K562 (cell line): ENCODE measurements at regions of chr15 and their contacts with region 1.

Region 1: DNA sequence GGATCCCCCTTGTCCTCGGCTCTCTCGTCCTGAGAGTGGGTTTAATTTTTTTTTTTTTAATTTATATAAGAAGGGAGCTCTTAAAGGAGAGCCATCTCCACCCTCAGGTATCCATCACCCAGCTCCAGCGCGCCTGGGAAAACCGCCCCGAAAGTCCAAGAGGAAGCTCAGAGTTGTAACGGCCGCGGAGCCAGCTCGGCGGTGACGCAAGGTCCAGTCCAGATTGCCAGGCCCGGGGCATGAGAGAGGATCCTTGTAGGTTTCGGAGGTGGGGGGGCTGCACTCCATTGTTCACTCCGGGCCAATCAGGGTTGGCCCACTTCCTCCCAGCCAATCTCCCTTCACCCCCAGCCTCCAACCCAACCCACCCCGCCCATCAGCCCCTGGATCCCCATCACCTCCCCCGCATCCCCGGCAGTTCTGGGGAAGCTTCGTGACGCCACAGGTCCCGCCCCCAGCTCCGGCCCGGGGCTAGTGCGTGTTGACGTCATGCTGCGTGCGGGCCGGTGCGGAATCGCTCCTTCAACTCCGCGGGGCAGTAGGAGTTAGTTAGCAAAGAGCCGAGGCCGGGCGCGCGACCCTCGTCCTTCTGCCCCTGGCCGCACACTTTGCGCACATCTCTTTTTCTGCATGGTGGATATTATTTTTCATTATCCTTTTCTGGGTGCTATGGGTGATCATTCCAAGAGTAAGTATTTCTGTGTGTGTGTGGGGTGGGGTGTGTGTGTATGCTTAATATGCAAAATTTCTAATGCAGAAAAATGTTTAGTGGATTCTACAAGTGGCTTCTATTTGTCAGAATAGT is at the start of gene ISL2:
- DNase-seq: peak; percentile 97 to 99 (median 98)
- ATAC-seq: peak; percentile 89
- H3K4me3 ChIP-seq: peak within 1 kb of the TSS; percentile 53
- H3K27ac ChIP-seq: peak within 1 kb of the TSS; percentile 94
- H3K4me1 ChIP-seq: peaks cover 11 to 55% of the 10 kb centered on the region in 2 experiments
- H3K27me3 ChIP-seq: no peaks in the 10 kb centered on the region
- CTCF ChIP-seq: no peak
- EP300 ChIP-seq: peak; percentile 44
- POLR2A ChIP-seq: peak; percentile 83
- RAD21 ChIP-seq: no peak
- polyA plus RNA-seq, gene ISL2: 0.15 to 0.35 TPM

Region 2: GRCh38 chr15:76235186-76235826 is 101.2 kb before region 1 on chr15:
- CTCF ChIA-PET with region 1: interaction called, 7 read pairs
- POLR2A ChIA-PET with region 1: interaction called, 3 read pairs
- in situ Hi-C with region 1: no loop called
- intact Hi-C with region 1: loop called (anchors 1 kb)
- DNase-seq: peak in 3 of 4 experiments; percentile 14 to 33 (median 17)
- ATAC-seq: peak; percentile 92
- H3K4me3 ChIP-seq: no peak overlapping the region
- H3K27ac ChIP-seq: no peak overlapping the region
- H3K4me1 ChIP-seq: no peaks in the 10 kb centered on the region
- H3K27me3 ChIP-seq: no peaks in the 10 kb centered on the region
- CTCF ChIP-seq: peak; percentile 23 to 65 (median 38); a peak in 2 of 6 replicates
- EP300 ChIP-seq: no peak
- POLR2A ChIP-seq: no peak
- RAD21 ChIP-seq: peak; percentile 46 to 71

Region 3: GRCh38 chr15:76311100-76311953 is 25.1 kb before region 1 on chr15 and contains the start of gene ETFA:
- CTCF ChIA-PET with region 1: no interaction called
- POLR2A ChIA-PET with region 1: interaction called, 16 read pairs
- in situ Hi-C with region 1: no loop called
- intact Hi-C with region 1: no loop called
- DNase-seq: peak; percentile 97 to 99 (median 98)
- ATAC-seq: peak; percentile 97
- H3K4me3 ChIP-seq: peak within 1 kb of the TSS; percentile 97
- H3K27ac ChIP-seq: peak within 1 kb of the TSS; percentile 96
- H3K4me1 ChIP-seq: peaks cover 28 to 29% of the 10 kb centered on the region in 2 experiments
- H3K27me3 ChIP-seq: no peaks in the 10 kb centered on the region
- CTCF ChIP-seq: no peak; a peak in 1 of 6 replicates
- EP300 ChIP-seq: peak; percentile 15
- POLR2A ChIP-seq: peak; percentile 96
- RAD21 ChIP-seq: no peak
- polyA plus RNA-seq, gene ETFA: 130 to 134 TPM

Region 4: DNA sequence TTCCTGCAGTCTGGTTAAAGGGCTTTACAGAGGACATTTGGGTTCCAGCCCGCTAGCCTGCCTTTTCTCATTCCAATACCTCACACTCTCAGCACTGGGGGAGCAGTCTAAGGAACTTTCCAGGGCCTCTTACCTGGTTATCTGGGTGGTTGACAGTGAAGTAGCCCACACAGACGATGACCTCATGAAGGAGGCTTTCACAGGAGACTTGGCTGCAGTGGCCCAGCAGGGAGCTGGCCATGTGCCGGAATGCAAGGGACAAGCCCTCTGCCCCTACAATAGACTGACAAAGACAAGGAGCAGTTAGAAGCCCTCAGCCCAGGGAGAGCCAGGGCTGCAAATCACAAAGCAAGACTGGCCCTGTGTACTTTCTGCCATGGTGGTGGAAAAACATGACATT is 39.6 kb after region 1 on chr15:
- CTCF ChIA-PET with region 1: no interaction called
- POLR2A ChIA-PET with region 1: no interaction called
- in situ Hi-C with region 1: no loop called
- intact Hi-C with region 1: no loop called
- DNase-seq: peak in 2 of 4 experiments; percentile 13 to 16
- ATAC-seq: peak; percentile 63
- H3K4me3 ChIP-seq: no peak overlapping the region
- H3K27ac ChIP-seq: no peak overlapping the region
- H3K4me1 ChIP-seq: peaks cover 0 to 3% of the 10 kb centered on the region in 2 experiments; a peak in 1 of 5 replicates
- H3K27me3 ChIP-seq: no peaks in the 10 kb centered on the region; a peak in 2 of 5 replicates
- CTCF ChIP-seq: no peak
- EP300 ChIP-seq: no peak
- POLR2A ChIP-seq: no peak
- RAD21 ChIP-seq: no peak

Region 5: GRCh38 chr15:76866716-76867321 is 530.4 kb after region 1 on chr15:
- CTCF ChIA-PET with region 1: no interaction called
- POLR2A ChIA-PET with region 1: no interaction called
- in situ Hi-C with region 1: no loop called
- intact Hi-C with region 1: loop called (anchors 10 kb)
- DNase-seq: peak in 3 of 4 experiments; percentile 9 to 31 (median 10)
- ATAC-seq: peak; percentile 57; the same call in 1 of the 3 replicates
- H3K4me3 ChIP-seq: no peak overlapping the region
- H3K27ac ChIP-seq: no peak overlapping the region
- H3K4me1 ChIP-seq: no peaks in the 10 kb centered on the region
- H3K27me3 ChIP-seq: no peaks in the 10 kb centered on the region
- CTCF ChIP-seq: peak; percentile 30 to 67 (median 33); a peak in 3 of 6 replicates
- EP300 ChIP-seq: no peak
- POLR2A ChIP-seq: no peak
- RAD21 ChIP-seq: peak; percentile 73